ENCODE measurements at regions of chr6 and their contacts with region 1.

Region 1: DNA sequence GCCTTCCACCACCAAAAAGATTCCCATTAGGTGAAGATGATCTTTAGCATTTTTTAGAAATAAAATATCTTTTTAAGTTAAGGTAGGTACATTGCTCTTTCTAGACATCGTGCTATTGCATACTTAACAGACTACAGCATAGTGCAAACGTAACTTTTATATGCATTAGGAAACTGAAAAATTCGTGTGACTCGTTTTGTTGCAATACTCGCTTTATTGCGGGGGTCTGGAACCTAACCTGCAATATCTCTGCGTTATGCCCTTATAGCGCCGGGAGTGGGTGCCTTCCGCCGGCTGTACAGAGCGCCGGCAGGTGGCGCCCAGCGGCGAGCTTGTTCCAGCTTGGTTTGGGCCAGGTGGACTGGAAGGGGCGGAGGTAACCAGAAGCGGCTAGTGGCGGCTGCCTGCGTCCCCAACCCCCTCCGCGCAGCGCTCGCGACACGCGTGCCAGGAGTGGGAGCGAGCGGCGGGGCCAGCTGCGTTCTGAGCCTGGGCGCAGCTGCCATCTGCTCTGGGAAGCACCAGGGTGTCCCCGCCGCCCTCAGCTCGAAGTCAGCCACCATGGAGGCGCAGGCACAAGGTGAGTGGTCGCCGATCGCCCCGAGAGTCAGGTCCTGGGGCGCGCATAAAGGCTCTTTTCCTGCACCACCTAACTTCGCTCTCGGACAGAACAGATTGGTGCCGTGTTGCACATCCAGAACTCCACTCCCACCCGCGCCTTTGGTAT is at the start of gene TPD52L1:
- DNase-seq: peak; percentile 83 to 93 (median 88)
- ATAC-seq: peak; percentile 94
- H3K4me3 ChIP-seq: peak within 1 kb of the TSS; percentile 61
- H3K27ac ChIP-seq: peak within 1 kb of the TSS; percentile 78
- H3K4me1 ChIP-seq: peaks cover 14 to 15% of the 10 kb centered on the region in 2 experiments
- H3K27me3 ChIP-seq: no peaks in the 10 kb centered on the region
- CTCF ChIP-seq: peak; percentile 89 to 95 (median 92)
- EP300 ChIP-seq: no peak
- POLR2A ChIP-seq: peak; percentile 70
- RAD21 ChIP-seq: peak; percentile 86 to 90
- polyA plus RNA-seq, gene TPD52L1: 12.9 to 17.1 TPM

Region 2: GRCh38 chr6:124961777-124962611 is 191.6 kb before region 1 on chr6 and contains the start of gene RNF217:
- CTCF ChIA-PET with region 1: no interaction called
- POLR2A ChIA-PET with region 1: interaction called, 3 read pairs
- in situ Hi-C with region 1: no loop called
- intact Hi-C with region 1: loop called (anchors 5 kb)
- DNase-seq: peak; percentile 82 to 86 (median 84)
- ATAC-seq: peak; percentile 74
- H3K4me3 ChIP-seq: peak within 1 kb of the TSS; percentile 75
- H3K27ac ChIP-seq: peak within 1 kb of the TSS; percentile 84
- H3K4me1 ChIP-seq: peaks cover 16 to 23% of the 10 kb centered on the region in 2 experiments
- H3K27me3 ChIP-seq: no peaks in the 10 kb centered on the region
- CTCF ChIP-seq: peak in 2 of 3 experiments; percentile 19 to 41; a peak in 3 of 6 replicates
- EP300 ChIP-seq: no peak
- POLR2A ChIP-seq: peak; percentile 68
- RAD21 ChIP-seq: no peak
- polyA plus RNA-seq, gene RNF217: 2.9 to 4.0 TPM

Region 3: DNA sequence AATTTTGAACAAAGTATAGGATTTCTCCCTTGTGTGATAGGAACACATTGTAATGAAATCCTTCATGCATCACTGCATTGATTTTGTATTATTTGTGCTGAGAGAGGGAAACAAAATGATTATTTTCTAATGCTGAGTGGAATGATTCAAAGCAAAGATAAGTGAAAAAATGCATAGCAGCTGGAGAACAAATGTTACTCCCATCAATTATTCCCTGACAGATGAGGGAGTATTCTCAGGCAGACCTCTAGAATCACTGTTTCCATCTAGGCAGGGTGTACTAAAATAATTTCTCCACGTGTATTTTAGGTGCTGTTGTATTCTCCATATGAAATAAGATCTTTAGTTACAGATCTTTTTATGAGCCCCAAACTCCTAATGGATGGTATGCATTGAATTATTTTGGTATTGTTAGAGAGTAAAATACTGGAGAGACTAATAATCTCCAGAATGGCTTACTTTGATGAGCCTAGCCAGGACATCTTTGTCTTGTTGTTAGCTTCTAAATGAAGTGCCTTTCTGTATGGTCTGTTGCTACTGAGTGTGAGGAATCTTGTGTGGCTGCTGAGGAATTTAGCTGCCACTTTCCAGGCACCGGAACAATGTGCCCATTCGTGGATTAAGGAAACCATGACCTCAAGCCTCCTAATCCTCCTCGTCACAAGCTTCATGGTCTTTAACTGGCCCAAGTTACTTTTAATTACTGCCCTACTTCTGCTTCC is 151.7 kb before region 1 on chr6:
- CTCF ChIA-PET with region 1: no interaction called
- POLR2A ChIA-PET with region 1: no interaction called
- in situ Hi-C with region 1: no loop called
- intact Hi-C with region 1: no loop called
- DNase-seq: no peak
- ATAC-seq: peak; percentile 31
- H3K4me3 ChIP-seq: no peak overlapping the region
- H3K27ac ChIP-seq: no peak overlapping the region; the same call in 2 of the 3 replicates
- H3K4me1 ChIP-seq: peaks cover 7 to 35% of the 10 kb centered on the region in 2 experiments
- H3K27me3 ChIP-seq: no peaks in the 10 kb centered on the region
- CTCF ChIP-seq: no peak
- EP300 ChIP-seq: no peak
- POLR2A ChIP-seq: no peak
- RAD21 ChIP-seq: no peak

Region 4: DNA sequence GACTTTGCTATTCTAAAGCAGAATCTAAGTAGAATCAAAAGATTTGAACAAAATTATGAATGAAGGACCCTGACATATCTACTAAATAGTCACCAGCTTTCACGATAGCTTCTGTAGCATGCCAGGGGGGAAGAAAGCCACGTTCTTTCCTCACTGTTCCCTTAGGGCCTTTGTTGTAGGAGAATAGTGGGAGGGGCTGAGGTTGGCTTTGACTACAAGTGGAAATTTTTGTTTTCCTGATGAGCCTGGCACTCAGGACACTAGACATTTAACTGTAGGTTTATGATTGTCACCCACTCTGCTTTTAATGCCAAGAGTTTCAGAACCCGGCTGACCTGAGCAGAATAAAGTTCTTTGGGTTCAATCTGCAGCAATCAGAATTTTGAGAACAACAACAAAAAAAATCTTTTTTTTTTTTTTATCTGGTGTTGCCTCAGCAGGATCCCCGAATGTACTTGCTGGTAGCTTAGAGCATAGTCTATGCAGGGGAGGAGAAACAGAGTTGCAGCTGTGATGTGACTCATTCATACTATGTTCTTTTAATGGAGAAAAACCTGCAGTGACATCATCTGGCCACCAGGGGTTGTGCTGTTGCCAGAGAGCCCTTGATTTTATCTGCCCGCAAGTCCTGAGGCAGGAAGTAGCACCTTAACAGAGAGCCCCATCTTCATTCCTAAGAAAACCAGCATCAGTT is 38.5 kb after region 1 on chr6:
- CTCF ChIA-PET with region 1: interaction called, 3 read pairs
- POLR2A ChIA-PET with region 1: no interaction called
- in situ Hi-C with region 1: no loop called
- intact Hi-C with region 1: loop called (anchors 2 kb)
- DNase-seq: peak; percentile 72 to 88 (median 75)
- ATAC-seq: peak; percentile 90
- H3K4me3 ChIP-seq: no peak overlapping the region
- H3K27ac ChIP-seq: no peak overlapping the region
- H3K4me1 ChIP-seq: peaks cover 5 to 46% of the 10 kb centered on the region in 2 experiments; a peak in 4 of 5 replicates
- H3K27me3 ChIP-seq: no peaks in the 10 kb centered on the region
- CTCF ChIP-seq: peak; percentile 78 to 92 (median 86)
- EP300 ChIP-seq: peak; percentile 60
- POLR2A ChIP-seq: no peak
- RAD21 ChIP-seq: peak; percentile 61 to 72

Region 5: DNA sequence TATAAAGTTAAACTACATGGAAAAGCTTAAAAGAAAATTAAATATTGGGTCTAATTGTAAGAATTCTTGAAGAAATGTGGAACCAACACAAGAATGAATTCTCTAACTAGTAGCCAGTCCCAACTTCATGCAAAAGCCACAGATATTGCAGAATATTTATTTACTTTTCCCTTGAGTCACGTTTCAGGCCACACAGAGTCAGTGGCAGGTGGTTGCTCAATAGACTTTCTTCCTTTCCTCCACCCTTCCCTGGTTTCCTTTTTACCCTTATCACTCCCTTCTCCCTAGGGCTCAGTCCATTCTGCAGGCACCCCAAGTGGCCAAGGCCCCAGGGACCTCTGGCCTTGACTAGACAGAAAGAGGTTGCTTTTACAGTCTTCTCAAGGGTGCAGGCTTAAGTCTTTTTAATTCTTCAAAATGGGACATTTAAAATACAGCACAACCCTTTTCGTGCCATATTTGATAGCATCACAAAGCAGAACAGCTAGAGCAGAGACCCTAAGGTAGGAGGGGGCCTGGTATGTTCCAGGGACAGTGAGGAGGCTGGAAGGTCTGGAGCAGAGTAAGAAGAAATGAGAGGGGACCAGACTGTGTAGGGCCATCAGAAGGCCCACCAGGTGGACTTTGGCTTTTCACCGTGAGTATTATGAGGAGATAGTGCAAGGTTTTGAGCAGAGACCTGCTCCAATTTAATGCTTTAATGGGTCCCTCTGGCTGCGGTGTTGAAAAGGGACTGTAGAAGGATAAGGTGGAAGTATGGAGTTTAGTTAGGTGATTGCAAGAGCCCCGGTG is 83.2 kb after region 1 on chr6:
- CTCF ChIA-PET with region 1: no interaction called
- POLR2A ChIA-PET with region 1: no interaction called
- in situ Hi-C with region 1: no loop called
- intact Hi-C with region 1: no loop called
- DNase-seq: no peak
- ATAC-seq: peak; percentile 61
- H3K4me3 ChIP-seq: no peak overlapping the region
- H3K27ac ChIP-seq: no peak overlapping the region
- H3K4me1 ChIP-seq: no peaks in the 10 kb centered on the region; a peak in 1 of 5 replicates
- H3K27me3 ChIP-seq: no peaks in the 10 kb centered on the region
- CTCF ChIP-seq: no peak
- EP300 ChIP-seq: no peak
- POLR2A ChIP-seq: no peak
- RAD21 ChIP-seq: no peak

Region 6: GRCh38 chr6:125262016-125263013 is 108.8 kb after region 1 on chr6:
- CTCF ChIA-PET with region 1: no interaction called
- POLR2A ChIA-PET with region 1: no interaction called
- in situ Hi-C with region 1: no loop called
- intact Hi-C with region 1: loop called (anchors 10 kb)
- DNase-seq: no peak
- ATAC-seq: no peak
- H3K4me3 ChIP-seq: no peak overlapping the region
- H3K27ac ChIP-seq: no peak overlapping the region
- H3K4me1 ChIP-seq: no peaks in the 10 kb centered on the region
- H3K27me3 ChIP-seq: no peaks in the 10 kb centered on the region
- CTCF ChIP-seq: no peak
- EP300 ChIP-seq: no peak
- POLR2A ChIP-seq: no peak
- RAD21 ChIP-seq: no peak

Region 7: GRCh38 chr6:125301435-125302391 is 148.2 kb after region 1 on chr6 and contains the start of gene HDDC2:
- CTCF ChIA-PET with region 1: no interaction called
- POLR2A ChIA-PET with region 1: no interaction called
- in situ Hi-C with region 1: no loop called
- intact Hi-C with region 1: loop called (anchors 1 kb)
- DNase-seq: peak; percentile 83 to 89 (median 89)
- ATAC-seq: peak; percentile 84
- H3K4me3 ChIP-seq: peak within 1 kb of the TSS; percentile 80
- H3K27ac ChIP-seq: peak within 1 kb of the TSS; percentile 96
- H3K4me1 ChIP-seq: peaks cover 11 to 51% of the 10 kb centered on the region in 2 experiments
- H3K27me3 ChIP-seq: no peaks in the 10 kb centered on the region
- CTCF ChIP-seq: no peak
- EP300 ChIP-seq: no peak
- POLR2A ChIP-seq: peak; percentile 93
- RAD21 ChIP-seq: no peak
- polyA plus RNA-seq, gene HDDC2: 587 to 632 TPM

Region 8: GRCh38 chr6:125753218-125753936 is 599.8 kb after region 1 on chr6:
- CTCF ChIA-PET with region 1: no interaction called
- POLR2A ChIA-PET with region 1: no interaction called
- in situ Hi-C with region 1: loop called (anchors 25 kb)
- intact Hi-C with region 1: no loop called
- DNase-seq: peak in 1 of 4 experiments; percentile 36
- ATAC-seq: no peak
- H3K4me3 ChIP-seq: no peak overlapping the region
- H3K27ac ChIP-seq: no peak overlapping the region
- H3K4me1 ChIP-seq: peaks cover 9 to 17% of the 10 kb centered on the region in 2 experiments; a peak in 4 of 5 replicates
- H3K27me3 ChIP-seq: peaks cover 16 to 27% of the 10 kb centered on the region in 2 experiments
- CTCF ChIP-seq: peak in 1 of 3 experiments; percentile 61; a peak in 2 of 6 replicates
- EP300 ChIP-seq: no peak
- POLR2A ChIP-seq: no peak
- RAD21 ChIP-seq: peak; percentile 58 to 69

Region 9: DNA sequence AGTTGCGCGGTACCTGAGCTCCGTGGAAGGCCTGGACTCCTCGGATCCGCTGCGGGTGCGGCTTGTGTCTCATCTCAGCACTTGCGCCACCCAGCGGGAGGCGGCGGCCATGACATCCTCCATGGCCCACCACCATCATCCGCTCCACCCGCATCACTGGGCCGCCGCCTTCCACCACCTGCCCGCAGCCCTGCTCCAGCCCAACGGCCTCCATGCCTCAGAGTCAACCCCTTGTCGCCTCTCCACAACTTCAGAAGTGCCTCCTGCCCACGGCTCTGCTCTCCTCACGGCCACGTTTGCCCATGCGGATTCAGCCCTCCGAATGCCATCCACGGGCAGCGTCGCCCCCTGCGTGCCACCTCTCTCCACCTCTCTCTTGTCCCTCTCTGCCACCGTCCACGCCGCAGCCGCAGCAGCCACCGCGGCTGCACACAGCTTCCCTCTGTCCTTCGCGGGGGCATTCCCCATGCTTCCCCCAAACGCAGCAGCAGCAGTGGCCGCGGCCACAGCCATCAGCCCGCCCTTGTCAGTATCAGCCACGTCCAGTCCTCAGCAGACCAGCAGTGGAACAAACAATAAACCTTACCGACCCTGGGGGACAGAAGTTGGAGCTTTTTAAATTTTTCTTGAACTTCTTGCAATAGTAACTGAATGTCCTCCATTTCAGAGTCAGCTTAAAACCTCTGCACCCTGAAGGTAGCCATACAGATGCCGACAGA is 605.8 kb after region 1 on chr6:
- CTCF ChIA-PET with region 1: no interaction called
- POLR2A ChIA-PET with region 1: no interaction called
- in situ Hi-C with region 1: loop called (anchors 25 kb)
- intact Hi-C with region 1: loop called (anchors 10 kb)
- DNase-seq: peak; percentile 77 to 84 (median 80)
- ATAC-seq: peak; percentile 98
- H3K4me3 ChIP-seq: no peak overlapping the region; the same call in 1 of the 2 replicates
- H3K27ac ChIP-seq: no peak overlapping the region
- H3K4me1 ChIP-seq: peaks cover 3 to 8% of the 10 kb centered on the region in 2 experiments; a peak in 3 of 5 replicates
- H3K27me3 ChIP-seq: peaks cover 7 to 14% of the 10 kb centered on the region in 2 experiments
- CTCF ChIP-seq: peak; percentile 78 to 88 (median 84)
- EP300 ChIP-seq: no peak
- POLR2A ChIP-seq: no peak
- RAD21 ChIP-seq: peak; percentile 48 to 77

Measured in K562 (cell line).